GM12878 (cell line): ENCODE measurements at regions of chr14 and their contacts with region 1.

Region 1: GRCh38 chr14:97306760-97307246 is 509.6 kb downstream of the VRK1 start:
- DNase-seq: peak; percentile 67
- ATAC-seq: peak; percentile 68
- H3K4me3 ChIP-seq: no peak overlapping the region
- H3K27ac ChIP-seq: peak overlapping the region; percentile 91
- H3K4me1 ChIP-seq: peaks cover 13% of the 10 kb centered on the region
- H3K27me3 ChIP-seq: no peaks in the 10 kb centered on the region
- CTCF ChIP-seq: no peak
- EP300 ChIP-seq: 0 out of 4 replicates have a peak, but pooled peaks have one; percentile 10 to 29
- POLR2A ChIP-seq: no peak
- RAD21 ChIP-seq: no peak

Region 2: GRCh38 chr14:97149775-97150174 is 157.0 kb before region 1 on chr14:
- CTCF ChIA-PET with region 1: no interaction called
- POLR2A ChIA-PET with region 1: no interaction called
- RAD21 ChIA-PET with region 1: no interaction called
- SMC1A ChIA-PET with region 1: no interaction called
- in situ Hi-C with region 1: no loop called
- intact Hi-C with region 1: no loop called
- DNase-seq: no peak
- ATAC-seq: no peak
- H3K4me3 ChIP-seq: no peak overlapping the region
- H3K27ac ChIP-seq: no peak overlapping the region
- H3K4me1 ChIP-seq: no peaks in the 10 kb centered on the region
- H3K27me3 ChIP-seq: no peaks in the 10 kb centered on the region
- CTCF ChIP-seq: no peak
- EP300 ChIP-seq: no peak
- POLR2A ChIP-seq: no peak
- RAD21 ChIP-seq: no peak

Region 3: GRCh38 chr14:97266653-97267052 is 40.1 kb before region 1 on chr14:
- CTCF ChIA-PET with region 1: no interaction called
- POLR2A ChIA-PET with region 1: no interaction called
- RAD21 ChIA-PET with region 1: no interaction called
- SMC1A ChIA-PET with region 1: no interaction called
- in situ Hi-C with region 1: no loop called
- intact Hi-C with region 1: no loop called
- DNase-seq: no peak
- ATAC-seq: no peak
- H3K4me3 ChIP-seq: no peak overlapping the region
- H3K27ac ChIP-seq: no peak overlapping the region
- H3K4me1 ChIP-seq: no peaks in the 10 kb centered on the region
- H3K27me3 ChIP-seq: no peaks in the 10 kb centered on the region
- CTCF ChIP-seq: no peak
- EP300 ChIP-seq: no peak
- POLR2A ChIP-seq: no peak
- RAD21 ChIP-seq: no peak

Region 4: DNA sequence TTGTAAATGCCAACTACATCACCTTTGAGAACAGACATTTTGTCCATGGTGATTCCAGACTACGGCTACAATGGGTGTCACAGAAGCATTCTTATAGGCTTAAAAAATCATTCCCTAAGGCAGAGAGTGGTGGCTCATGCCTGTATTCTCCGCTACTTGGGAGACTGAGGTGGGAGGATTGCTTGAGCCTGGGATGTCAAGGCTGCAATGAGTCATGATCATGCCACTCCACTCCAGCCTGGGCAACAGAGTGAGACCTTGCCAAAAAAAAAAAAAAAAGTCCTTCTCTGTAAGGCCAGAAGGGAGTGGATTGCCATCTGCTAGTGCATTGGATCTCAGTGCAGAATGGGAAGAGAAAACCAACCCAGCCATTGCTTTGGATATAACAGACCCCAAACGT is 12.9 kb after region 1 on chr14:
- CTCF ChIA-PET with region 1: interaction called, 11 read pairs
- POLR2A ChIA-PET with region 1: interaction called, 8 read pairs
- RAD21 ChIA-PET with region 1: interaction called, 45 read pairs
- SMC1A ChIA-PET with region 1: interaction called, 133 read pairs
- in situ Hi-C with region 1: no loop called
- intact Hi-C with region 1: no loop called
- DNase-seq: no peak
- ATAC-seq: no peak; the same call in 2 of the 3 replicates
- H3K4me3 ChIP-seq: no peak overlapping the region
- H3K27ac ChIP-seq: no peak overlapping the region
- H3K4me1 ChIP-seq: peaks cover 8% of the 10 kb centered on the region
- H3K27me3 ChIP-seq: no peaks in the 10 kb centered on the region
- CTCF ChIP-seq: no peak
- EP300 ChIP-seq: no peak
- POLR2A ChIP-seq: no peak
- RAD21 ChIP-seq: no peak

Region 5: DNA sequence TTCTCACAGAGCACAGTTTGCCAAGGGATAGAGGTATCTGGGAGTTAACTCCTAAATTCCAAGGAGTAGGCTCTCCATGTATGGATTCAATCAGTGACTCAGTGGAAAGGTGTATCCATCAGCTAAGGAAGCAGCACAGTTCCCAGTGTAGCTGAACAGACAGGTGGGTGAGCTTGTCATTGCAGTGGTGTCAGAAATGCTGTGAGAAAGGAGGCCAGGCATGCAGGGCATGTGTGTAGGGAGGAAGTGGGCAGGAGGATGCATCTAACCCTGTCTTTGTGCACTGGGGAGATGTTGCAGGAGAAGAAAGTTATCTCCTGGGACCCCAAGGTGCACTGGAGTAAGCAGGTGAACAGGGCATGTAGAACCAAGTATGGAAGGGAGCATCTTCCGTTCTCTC is 29.4 kb after region 1 on chr14:
- CTCF ChIA-PET with region 1: interaction called, 3 read pairs
- POLR2A ChIA-PET with region 1: no interaction called
- RAD21 ChIA-PET with region 1: interaction called, 5 read pairs
- SMC1A ChIA-PET with region 1: interaction called, 34 read pairs
- in situ Hi-C with region 1: no loop called
- intact Hi-C with region 1: loop called (anchors 1 kb)
- DNase-seq: no peak
- ATAC-seq: no peak
- H3K4me3 ChIP-seq: no peak overlapping the region
- H3K27ac ChIP-seq: no peak overlapping the region
- H3K4me1 ChIP-seq: peaks cover 23% of the 10 kb centered on the region
- H3K27me3 ChIP-seq: no peaks in the 10 kb centered on the region
- CTCF ChIP-seq: no peak
- EP300 ChIP-seq: no peak
- POLR2A ChIP-seq: no peak
- RAD21 ChIP-seq: no peak

Region 6: GRCh38 chr14:97359341-97359740 is 52.5 kb after region 1 on chr14:
- CTCF ChIA-PET with region 1: interaction called, 3 read pairs
- POLR2A ChIA-PET with region 1: interaction called, 5 read pairs
- RAD21 ChIA-PET with region 1: interaction called, 15 read pairs
- SMC1A ChIA-PET with region 1: interaction called, 15 read pairs
- in situ Hi-C with region 1: no loop called
- intact Hi-C with region 1: no loop called
- DNase-seq: no peak
- ATAC-seq: no peak
- H3K4me3 ChIP-seq: no peak overlapping the region
- H3K27ac ChIP-seq: no peak overlapping the region
- H3K4me1 ChIP-seq: no peaks in the 10 kb centered on the region
- H3K27me3 ChIP-seq: no peaks in the 10 kb centered on the region
- CTCF ChIP-seq: no peak
- EP300 ChIP-seq: no peak
- POLR2A ChIP-seq: no peak
- RAD21 ChIP-seq: no peak

Region 7: GRCh38 chr14:97390096-97390724 is 83.4 kb after region 1 on chr14:
- CTCF ChIA-PET with region 1: interaction called, 7 read pairs
- POLR2A ChIA-PET with region 1: interaction called, 8 read pairs
- RAD21 ChIA-PET with region 1: interaction called, 214 read pairs
- SMC1A ChIA-PET with region 1: interaction called, 43 read pairs
- in situ Hi-C with region 1: no loop called
- intact Hi-C with region 1: no loop called
- DNase-seq: no peak
- ATAC-seq: no peak
- H3K4me3 ChIP-seq: no peak overlapping the region
- H3K27ac ChIP-seq: no peak overlapping the region
- H3K4me1 ChIP-seq: peaks cover 13% of the 10 kb centered on the region; the same call in 1 of the 2 replicates
- H3K27me3 ChIP-seq: no peaks in the 10 kb centered on the region
- CTCF ChIP-seq: no peak
- EP300 ChIP-seq: no peak
- POLR2A ChIP-seq: no peak
- RAD21 ChIP-seq: no peak

Region 8: DNA sequence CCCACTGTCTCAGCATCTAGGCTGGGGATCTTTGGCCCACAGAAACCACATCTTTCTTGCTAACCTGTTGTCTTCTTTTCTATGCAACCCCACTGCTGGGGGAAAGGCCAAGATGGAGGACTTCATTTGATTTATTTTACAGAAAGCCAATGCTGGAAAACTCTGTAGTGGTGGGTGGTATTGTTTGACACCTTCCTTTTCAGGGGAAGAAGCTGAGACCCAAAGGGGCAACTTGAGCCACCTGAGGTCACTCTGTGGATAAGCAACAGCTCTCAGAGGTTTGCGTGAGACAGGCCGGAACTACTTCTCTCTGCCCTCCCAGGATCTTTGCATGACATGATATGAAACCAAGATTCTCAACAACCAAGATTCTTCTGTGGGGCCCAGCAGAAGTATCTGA is 135.6 kb after region 1 on chr14:
- CTCF ChIA-PET with region 1: interaction called, 3 read pairs
- POLR2A ChIA-PET with region 1: no interaction called
- RAD21 ChIA-PET with region 1: interaction called, 6 read pairs
- SMC1A ChIA-PET with region 1: interaction called, 18 read pairs
- in situ Hi-C with region 1: no loop called
- intact Hi-C with region 1: loop called (anchors 1 kb)
- DNase-seq: peak; percentile 21
- ATAC-seq: peak; percentile 67
- H3K4me3 ChIP-seq: no peak overlapping the region
- H3K27ac ChIP-seq: peak overlapping the region; percentile 38
- H3K4me1 ChIP-seq: no peaks in the 10 kb centered on the region
- H3K27me3 ChIP-seq: no peaks in the 10 kb centered on the region
- CTCF ChIP-seq: no peak
- EP300 ChIP-seq: peak; percentile 65 to 74; a peak in 3 of 4 replicates
- POLR2A ChIP-seq: no peak
- RAD21 ChIP-seq: peak; percentile 27; the same call in 1 of the 2 replicates